Common myeloid progenitor, CD34-positive (primary cell): ENCODE measurements at regions of chr3 and their contacts with region 1.

Region 1: DNA sequence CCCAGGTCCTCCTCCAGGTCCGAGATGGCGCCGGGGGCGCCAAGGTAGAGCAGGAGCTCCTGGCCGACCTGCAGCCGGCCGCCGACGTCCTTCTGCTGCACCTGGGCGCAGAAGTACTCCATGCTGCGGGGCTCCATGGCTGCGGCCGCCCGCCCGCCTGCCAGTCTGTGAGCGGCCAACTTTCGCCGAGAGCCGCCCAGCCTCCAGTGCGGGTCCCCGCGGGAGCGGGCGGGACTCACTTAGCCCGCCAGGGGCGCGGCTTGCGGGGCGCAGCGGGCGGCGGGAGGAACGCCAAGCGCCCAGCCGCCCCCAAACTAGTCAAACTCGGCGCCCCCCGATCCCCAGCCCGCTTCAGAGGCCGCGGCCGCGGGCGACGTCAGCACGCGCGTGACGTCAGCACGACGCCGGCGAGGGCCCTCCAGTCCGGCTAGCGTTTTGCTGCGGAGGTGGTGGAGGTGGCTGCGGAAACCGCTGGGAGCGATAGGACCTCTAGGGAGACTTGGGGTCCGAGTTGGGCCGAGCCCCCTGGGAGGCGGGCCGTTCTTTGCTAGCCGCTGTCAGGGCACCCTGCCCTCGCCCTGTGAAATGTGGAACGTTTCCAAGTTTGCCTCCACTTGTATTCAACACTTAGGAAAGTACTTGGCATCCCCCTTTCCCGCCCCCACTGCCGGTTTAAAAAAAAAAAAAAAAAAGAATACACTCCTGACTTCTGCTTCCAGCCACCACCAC is at the start of gene CLASP2:
- DNase-seq: peak; percentile 93 to 96 (median 95)
- H3K4me3 ChIP-seq: peak within 1 kb of the TSS; percentile 79 to 98 (median 90)
- H3K27ac ChIP-seq: peak within 1 kb of the TSS; percentile 75 to 92
- H3K4me1 ChIP-seq: peaks cover 5 to 19% (median 12%) of the 10 kb centered on the region in 4 experiments
- H3K27me3 ChIP-seq: no peaks in the 10 kb centered on the region

Region 2: GRCh38 chr3:33636125-33636850 is 81.7 kb before region 1 on chr3:
- CTCF ChIA-PET with region 1: interaction called, 20 read pairs
- POLR2A ChIA-PET with region 1: no interaction called
- DNase-seq: peak; percentile 79 to 89 (median 88)
- H3K4me3 ChIP-seq: no peak overlapping the region
- H3K27ac ChIP-seq: no peak overlapping the region
- H3K4me1 ChIP-seq: no peaks in the 10 kb centered on the region
- H3K27me3 ChIP-seq: no peaks in the 10 kb centered on the region

Region 3: GRCh38 chr3:33749546-33750210 is 31.6 kb after region 1 on chr3:
- CTCF ChIA-PET with region 1: no interaction called
- POLR2A ChIA-PET with region 1: no interaction called
- DNase-seq: peak; percentile 36 to 88 (median 81)
- H3K4me3 ChIP-seq: no peak overlapping the region
- H3K27ac ChIP-seq: no peak overlapping the region
- H3K4me1 ChIP-seq: peaks cover 0 to 12% (median 4%) of the 10 kb centered on the region in 4 experiments
- H3K27me3 ChIP-seq: no peaks in the 10 kb centered on the region